Heart right ventricle (tissue), 16 donors: ENCODE measurements at regions of chr5 and their contacts with region 1.

Region 1: DNA sequence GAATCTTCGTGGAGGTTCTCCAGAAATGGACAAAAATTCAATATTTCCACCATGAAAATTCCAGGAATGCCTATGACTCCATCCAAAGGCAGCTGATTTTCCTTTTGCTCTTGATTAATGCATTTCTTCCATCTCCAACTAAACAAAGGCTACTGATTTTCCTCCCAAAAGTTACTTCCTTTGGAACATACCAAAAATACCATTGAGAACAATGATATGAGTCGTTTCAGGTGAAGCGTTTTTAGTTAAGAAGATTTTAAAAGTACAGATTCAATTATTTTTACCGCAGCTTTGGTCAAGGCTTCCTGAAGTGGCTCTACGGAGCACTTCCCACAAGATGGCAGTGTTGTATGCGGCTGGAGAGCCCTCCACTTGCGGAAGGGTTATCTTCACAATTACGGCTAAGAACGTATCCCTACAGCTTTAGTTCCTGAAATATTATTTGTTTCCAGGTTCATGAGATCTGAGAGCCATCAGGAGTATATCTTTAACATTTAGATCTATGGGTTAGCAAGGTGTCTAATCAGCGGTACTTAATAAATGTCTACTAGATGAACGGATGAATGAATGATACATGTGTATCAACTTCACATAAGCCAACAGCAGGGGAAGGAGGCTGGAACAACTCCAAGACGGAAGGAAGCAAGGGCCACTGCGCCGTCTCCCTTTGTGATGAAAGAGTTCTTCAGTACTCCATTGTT is 35.9 kb upstream of the ARSB start:
- DNase-seq: peak; percentile 32 to 36
- ATAC-seq: peak in 7 of 8 donors; percentile 66 to 88 (median 81)
- H3K4me3 ChIP-seq: peak overlapping the region in 6 of 10 donors; percentile 3 to 40 (median 19)
- H3K27ac ChIP-seq: no peak overlapping the region
- H3K4me1 ChIP-seq: peaks cover 0 to 19% (median 8%) of the 10 kb centered on the region in 9 donors
- H3K27me3 ChIP-seq: peaks cover 0 to 17% (median 0%) of the 10 kb centered on the region in 7 donors
- CTCF ChIP-seq: peak; percentile 48 to 91 (median 78)

Region 2: DNA sequence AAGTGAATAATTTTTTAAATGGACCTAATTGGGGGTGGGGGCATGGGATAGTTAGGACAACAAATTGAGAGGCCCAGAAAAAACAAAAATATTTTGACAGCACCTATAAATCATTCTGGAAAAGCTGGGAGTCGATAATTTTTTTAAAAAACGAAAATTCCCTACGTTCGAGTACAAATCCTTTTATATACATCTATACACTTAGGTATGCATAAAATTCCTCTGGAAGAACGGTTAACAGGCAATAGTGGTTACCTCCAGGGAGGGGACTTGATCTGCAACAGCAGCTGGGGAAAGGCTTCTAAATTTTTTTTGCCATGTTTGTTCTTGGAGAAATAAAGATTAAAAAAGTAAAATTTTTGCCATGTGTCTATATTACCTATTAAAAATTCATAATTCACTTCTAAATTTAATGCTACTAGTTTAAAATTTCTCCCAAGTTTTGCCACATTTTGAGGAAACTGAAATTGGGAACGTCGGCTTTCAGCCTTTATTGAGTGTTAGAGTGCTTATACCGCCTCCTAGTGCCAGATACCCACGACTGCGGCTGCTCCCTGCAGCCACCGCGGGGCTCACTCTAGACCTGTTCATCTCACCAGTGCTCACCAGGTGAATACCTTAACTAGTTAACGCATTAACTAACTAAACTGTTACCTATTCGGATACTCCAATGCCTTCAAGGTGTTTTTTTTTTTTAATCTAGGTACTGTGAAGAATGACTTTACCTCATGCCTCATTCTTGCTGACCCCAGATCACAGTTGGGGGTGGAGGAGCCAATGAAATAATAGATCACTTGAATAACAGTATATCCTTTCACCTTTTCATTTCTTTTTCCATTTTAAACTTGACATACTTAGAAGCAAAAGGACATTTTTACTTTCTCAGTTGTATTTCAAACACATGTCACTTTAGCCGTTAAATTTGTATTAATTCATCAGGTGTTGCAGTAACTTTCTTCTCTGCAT is 88.8 kb after region 1 on chr5:
- intact Hi-C with region 1: loop called in 3 of 10 experiments (anchors 5 kb)
- DNase-seq: no peak
- ATAC-seq: peak in 2 of 8 donors; percentile 41
- H3K4me3 ChIP-seq: no peak overlapping the region
- H3K27ac ChIP-seq: no peak overlapping the region
- H3K4me1 ChIP-seq: peaks cover 0 to 26% (median 9%) of the 10 kb centered on the region in 9 donors
- H3K27me3 ChIP-seq: peaks cover 11 to 76% (median 44%) of the 10 kb centered on the region in 7 donors
- CTCF ChIP-seq: peak in 7 of 9 donors; percentile 38 to 70 (median 44)

Region 3: DNA sequence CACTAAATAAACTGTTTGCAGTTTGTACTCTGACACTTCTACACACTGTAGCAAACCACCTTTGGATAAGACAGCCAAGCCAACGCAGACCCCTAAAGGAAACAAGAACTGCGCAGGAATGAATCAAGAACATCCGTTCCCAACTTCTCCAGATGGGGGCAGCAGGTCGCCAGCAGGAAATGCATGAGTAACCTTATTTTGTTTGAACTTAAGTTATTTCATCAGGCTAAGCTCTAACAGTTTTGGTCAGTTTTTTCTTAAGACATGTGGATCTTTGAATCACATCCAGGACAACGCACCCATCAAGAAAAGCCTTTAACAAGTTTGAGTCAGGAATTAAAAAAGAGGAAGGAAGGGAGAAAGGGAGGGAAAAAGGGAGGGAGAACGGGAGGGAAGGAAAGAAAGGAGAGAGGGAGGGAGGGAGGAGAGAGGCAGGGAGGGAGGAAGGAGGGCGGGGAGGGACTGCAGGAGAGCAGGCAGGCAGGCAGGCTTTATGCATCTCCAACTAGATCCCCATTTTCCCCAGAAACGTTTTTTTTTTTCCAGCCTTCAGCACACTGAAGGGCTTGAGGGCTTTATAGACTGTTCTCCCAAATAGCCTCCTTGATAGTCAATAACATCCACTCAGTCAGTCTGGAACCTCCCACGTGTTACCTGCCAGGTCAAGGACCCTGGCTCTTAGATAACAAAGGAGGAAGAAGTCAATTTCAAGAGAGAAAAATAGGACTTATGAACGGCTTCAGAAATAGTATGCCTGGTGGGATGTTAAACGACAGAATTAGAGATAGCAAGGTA is 112.8 kb after region 1 on chr5:
- intact Hi-C with region 1: loop called (anchors 1 to 5 kb)
- DNase-seq: peak; percentile 34 to 60
- ATAC-seq: peak; percentile 34 to 82 (median 70)
- H3K4me3 ChIP-seq: peak overlapping the region in 8 of 10 donors; percentile 19 to 49 (median 34)
- H3K27ac ChIP-seq: peak overlapping the region in 5 of 10 donors; percentile 5 to 60 (median 31)
- H3K4me1 ChIP-seq: peaks cover 0 to 13% (median 9%) of the 10 kb centered on the region in 9 donors
- H3K27me3 ChIP-seq: no peaks in the 10 kb centered on the region
- CTCF ChIP-seq: peak; percentile 59 to 77 (median 68)

Region 4: GRCh38 chr5:79464695-79465332 is 443.8 kb after region 1 on chr5:
- intact Hi-C with region 1: loop called in 9 of 10 experiments (anchors 5 to 10 kb)
- DNase-seq: no peak
- ATAC-seq: peak in 4 of 8 donors; percentile 36 to 55 (median 49)
- H3K4me3 ChIP-seq: no peak overlapping the region
- H3K27ac ChIP-seq: no peak overlapping the region
- H3K4me1 ChIP-seq: peaks cover 0 to 25% (median 4%) of the 10 kb centered on the region in 9 donors
- H3K27me3 ChIP-seq: no peaks in the 10 kb centered on the region
- CTCF ChIP-seq: peak; percentile 12 to 71 (median 57)

Region 5: DNA sequence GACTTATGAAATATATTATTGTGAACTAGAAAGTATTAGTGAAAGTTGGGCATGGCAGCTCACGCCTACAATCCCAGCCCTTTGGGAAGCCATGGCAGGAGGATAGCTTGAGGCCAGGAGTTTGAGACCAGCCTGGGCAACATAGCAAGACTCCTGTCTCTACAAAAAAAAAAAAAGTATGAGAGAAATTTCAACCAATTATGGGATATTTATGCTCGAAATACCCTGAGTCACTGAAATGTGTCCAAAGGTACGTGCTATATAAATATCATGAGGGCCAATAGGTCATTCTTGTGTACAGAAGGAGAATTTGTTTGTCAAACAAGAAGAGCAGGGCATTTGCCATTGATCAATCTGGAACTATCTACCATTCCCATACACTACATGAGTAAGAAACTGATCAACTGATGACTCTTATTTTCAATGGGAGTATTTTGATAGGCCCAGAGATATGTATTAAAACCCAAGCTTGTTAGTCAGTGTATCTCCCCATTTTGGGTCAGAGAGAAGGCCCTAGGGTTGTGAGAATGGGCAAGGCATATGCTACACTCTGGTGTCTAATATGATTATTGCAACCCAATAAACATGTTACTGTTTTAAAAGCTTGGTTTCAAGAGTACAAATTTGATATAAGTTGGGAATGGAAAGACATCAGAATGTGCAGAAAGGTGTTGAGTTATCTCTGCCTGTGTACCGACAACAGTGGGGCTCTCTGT is 514.6 kb after region 1 on chr5:
- intact Hi-C with region 1: loop called in 4 of 10 experiments (anchors 10 kb)
- DNase-seq: no peak
- ATAC-seq: peak in 3 of 8 donors; percentile 48 to 53 (median 49)
- H3K4me3 ChIP-seq: no peak overlapping the region
- H3K27ac ChIP-seq: no peak overlapping the region
- H3K4me1 ChIP-seq: no peaks in the 10 kb centered on the region
- H3K27me3 ChIP-seq: no peaks in the 10 kb centered on the region
- CTCF ChIP-seq: peak in 7 of 9 donors; percentile 23 to 53 (median 49)